ENCODE measurements at regions of chr5 and their contacts with region 1.

Region 1: GRCh38 chr5:53170748-53171349 is 61.3 kb upstream of the MOCS2 start:
- DNase-seq: peak; percentile 69
- H3K4me3 ChIP-seq: no peak overlapping the region
- H3K27ac ChIP-seq: no peak overlapping the region
- H3K4me1 ChIP-seq: peaks cover 19% of the 10 kb centered on the region
- H3K27me3 ChIP-seq: no peaks in the 10 kb centered on the region

Region 2: DNA sequence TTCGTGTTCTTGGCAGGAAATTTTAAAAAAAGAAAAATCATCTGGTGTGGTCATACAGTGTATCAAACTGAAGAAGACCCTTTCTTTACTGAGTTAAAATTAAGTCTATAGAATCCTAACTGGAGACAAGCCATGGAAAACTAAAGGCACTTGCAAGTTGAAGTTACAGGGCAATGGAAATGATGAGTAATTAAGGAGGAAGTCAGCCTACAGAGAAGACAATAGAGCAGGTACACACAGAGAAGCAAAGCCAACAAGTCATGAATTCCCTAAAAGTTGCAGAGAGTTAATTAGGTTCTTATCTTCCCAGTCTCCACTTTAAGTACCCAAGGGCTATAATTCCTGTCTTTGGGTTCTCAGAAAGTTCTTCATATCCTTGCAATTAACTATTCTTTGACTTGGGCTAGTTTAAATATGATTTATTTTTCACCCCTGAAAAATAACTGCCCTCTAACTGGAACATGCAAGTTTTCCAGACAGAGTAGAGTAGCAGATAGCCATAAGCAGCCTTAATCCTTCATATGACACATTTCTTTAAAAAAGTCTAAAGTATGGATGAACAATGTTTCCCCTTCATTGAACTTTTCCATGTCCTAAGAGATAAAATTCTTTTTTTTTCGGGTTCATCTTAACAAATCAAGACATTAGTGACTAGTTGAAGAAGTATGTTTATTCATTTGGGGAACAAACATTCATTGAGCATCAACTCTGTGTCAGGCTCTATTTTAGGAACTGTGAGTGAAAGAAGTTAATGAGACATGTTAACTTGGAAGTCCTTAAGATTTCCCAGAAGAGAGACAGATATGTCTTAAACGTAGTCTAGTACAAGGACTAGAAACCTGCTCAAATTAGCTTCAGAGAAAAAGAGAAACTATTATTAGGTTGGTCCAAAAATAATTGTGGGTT is 186.9 kb before region 1 on chr5:
- in situ Hi-C with region 1: no loop called
- DNase-seq: peak; percentile 53
- H3K4me3 ChIP-seq: no peak overlapping the region
- H3K27ac ChIP-seq: peak overlapping the region; percentile 16
- H3K4me1 ChIP-seq: peaks cover 47% of the 10 kb centered on the region
- H3K27me3 ChIP-seq: no peaks in the 10 kb centered on the region

Region 3: DNA sequence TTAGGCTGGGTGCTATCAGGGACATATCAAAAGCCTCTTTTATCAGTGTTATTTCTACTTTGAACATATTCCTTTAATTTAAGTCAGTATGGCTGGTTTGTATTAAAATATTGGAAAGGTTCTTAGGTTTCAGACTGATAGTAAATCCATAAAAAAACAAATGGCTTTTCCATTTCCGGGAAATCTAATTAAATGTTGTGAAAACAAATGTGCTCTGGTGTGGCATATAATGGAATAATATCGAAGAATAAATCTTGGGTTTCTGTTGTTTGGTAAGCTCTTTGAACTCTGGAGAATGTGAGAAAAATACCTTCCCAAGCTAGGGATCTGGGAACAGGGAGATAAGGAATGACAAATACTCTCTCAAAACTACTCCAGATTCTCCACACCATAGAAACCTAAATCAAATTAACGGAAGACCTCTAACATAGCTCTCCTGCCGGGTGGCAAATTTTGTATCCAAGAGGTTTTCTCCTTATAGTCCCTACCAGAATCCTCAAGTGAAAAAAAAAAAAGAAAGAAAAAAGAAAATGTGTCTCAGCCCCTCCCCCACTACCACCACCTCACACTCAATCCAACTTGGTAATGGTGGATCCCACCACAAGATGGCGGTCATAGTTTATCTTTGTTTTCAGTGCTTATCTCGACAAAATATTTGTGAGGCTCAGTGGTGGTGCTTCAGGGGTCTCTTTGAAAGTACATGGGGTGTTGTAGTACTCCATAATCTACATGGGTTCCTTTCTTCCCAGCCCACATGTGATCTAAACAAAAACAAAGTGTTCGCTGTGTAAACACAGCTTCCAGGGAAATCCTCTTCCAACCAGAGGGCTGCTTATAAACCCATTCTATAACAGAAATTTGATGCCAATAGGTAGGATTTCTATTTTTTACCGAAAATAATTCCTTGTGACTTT is 255.0 kb after region 1 on chr5:
- in situ Hi-C with region 1: loop called (anchors 25 kb)
- DNase-seq: peak; percentile 18
- H3K4me3 ChIP-seq: no peak overlapping the region
- H3K27ac ChIP-seq: peak overlapping the region; percentile 89
- H3K4me1 ChIP-seq: peaks cover 58% of the 10 kb centered on the region
- H3K27me3 ChIP-seq: no peaks in the 10 kb centered on the region